ENCODE measurements at regions of chr5 and their contacts with region 1.

Region 1: DNA sequence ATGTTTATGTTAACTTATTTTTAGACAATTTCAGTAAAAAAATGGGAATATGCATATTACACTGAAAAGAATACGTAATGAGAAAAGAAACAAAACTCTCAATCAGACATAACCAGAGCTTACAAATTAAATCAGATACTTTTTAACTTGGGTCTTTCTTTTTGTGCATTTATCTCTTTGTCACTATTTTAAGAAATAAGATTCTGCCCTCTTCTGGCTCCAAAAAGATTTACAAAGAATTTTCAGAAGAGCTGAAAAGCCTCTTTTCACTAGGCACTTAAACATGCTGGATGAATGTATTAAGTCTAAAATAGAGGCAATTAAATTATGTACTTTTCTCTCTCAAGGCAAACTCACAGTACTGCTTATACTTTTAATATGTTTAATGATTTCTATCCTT is 55.5 kb downstream of the CEP120 start:
- DNase-seq: peak in 1 of 35 experiments; percentile 2
- ATAC-seq: no peak
- H3K4me3 ChIP-seq: no peak overlapping the region
- H3K4me3 Mint-ChIP-seq: no peak overlapping the region
- H3K27ac ChIP-seq: no peak overlapping the region
- H3K27ac Mint-ChIP-seq: no peak overlapping the region
- H3K4me1 ChIP-seq: no peaks in the 10 kb centered on the region
- H3K4me1 Mint-ChIP-seq: peaks cover 2 to 13% (median 8%) of the 10 kb centered on the region in 3 donors
- H3K27me3 ChIP-seq: no peaks in the 10 kb centered on the region
- H3K27me3 Mint-ChIP-seq: no peaks in the 10 kb centered on the region

Region 2: GRCh38 chr5:123617561-123617960 is 249.8 kb after region 1 on chr5:
- CTCF ChIA-PET with region 1: interaction called in 1 of 2 experiments, 11 read pairs
- POLR2A ChIA-PET with region 1: no interaction called
- DNase-seq: no peak
- ATAC-seq: no peak
- H3K4me3 ChIP-seq: no peak overlapping the region
- H3K4me3 Mint-ChIP-seq: no peak overlapping the region
- H3K27ac ChIP-seq: no peak overlapping the region
- H3K27ac Mint-ChIP-seq: no peak overlapping the region
- H3K4me1 ChIP-seq: no peaks in the 10 kb centered on the region
- H3K4me1 Mint-ChIP-seq: no peaks in the 10 kb centered on the region
- H3K27me3 ChIP-seq: no peaks in the 10 kb centered on the region
- H3K27me3 Mint-ChIP-seq: no peaks in the 10 kb centered on the region

Region 3: GRCh38 chr5:124088289-124089032 is 720.7 kb after region 1 on chr5:
- CTCF ChIA-PET with region 1: no interaction called
- POLR2A ChIA-PET with region 1: no interaction called
- DNase-seq: no peak
- ATAC-seq: no peak
- H3K4me3 ChIP-seq: no peak overlapping the region
- H3K4me3 Mint-ChIP-seq: no peak overlapping the region
- H3K27ac ChIP-seq: no peak overlapping the region
- H3K27ac Mint-ChIP-seq: no peak overlapping the region
- H3K4me1 ChIP-seq: no peaks in the 10 kb centered on the region
- H3K4me1 Mint-ChIP-seq: no peaks in the 10 kb centered on the region
- H3K27me3 ChIP-seq: no peaks in the 10 kb centered on the region
- H3K27me3 Mint-ChIP-seq: no peaks in the 10 kb centered on the region